ENCODE measurements at regions of chr7 and their contacts with region 1.

Region 1: DNA sequence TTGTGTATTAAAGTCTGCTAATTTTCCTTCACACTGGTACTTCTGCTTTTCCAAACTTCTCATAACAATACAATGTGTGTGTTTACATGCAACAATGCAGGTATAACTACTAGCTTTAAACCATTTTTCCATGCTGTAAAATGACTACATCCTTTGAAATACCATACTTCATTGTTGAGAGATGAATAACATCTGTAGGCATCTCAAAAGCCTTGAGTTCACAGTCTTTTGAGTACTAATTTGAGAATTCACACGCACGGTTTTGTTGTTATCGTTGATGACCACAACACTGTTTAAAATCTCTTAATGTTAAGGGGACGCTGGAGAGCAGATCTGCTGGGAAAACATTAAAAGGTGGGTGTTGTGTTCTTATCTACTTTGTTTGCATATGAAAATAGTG is 37.4 kb downstream of the SEMA3A start:
- DNase-seq: no peak
- H3K4me3 ChIP-seq: no peak overlapping the region
- H3K27ac ChIP-seq: peak overlapping the region; percentile 67
- H3K4me1 ChIP-seq: peaks cover 70% of the 10 kb centered on the region
- H3K27me3 ChIP-seq: no peaks in the 10 kb centered on the region
- CTCF ChIP-seq: no peak

Region 2: GRCh38 chr7:83588602-83589240 is 568.5 kb before region 1 on chr7:
- CTCF ChIA-PET with region 1: no interaction called
- POLR2A ChIA-PET with region 1: no interaction called
- intact Hi-C with region 1: no loop called
- DNase-seq: peak; percentile 61
- H3K4me3 ChIP-seq: no peak overlapping the region
- H3K27ac ChIP-seq: no peak overlapping the region
- H3K4me1 ChIP-seq: no peaks in the 10 kb centered on the region
- H3K27me3 ChIP-seq: peaks cover 8% of the 10 kb centered on the region
- CTCF ChIP-seq: no peak

Region 3: GRCh38 chr7:83970081-83970480 is 187.1 kb before region 1 on chr7:
- CTCF ChIA-PET with region 1: interaction called, 14 read pairs
- POLR2A ChIA-PET with region 1: no interaction called
- intact Hi-C with region 1: no loop called
- DNase-seq: peak; percentile 87
- H3K4me3 ChIP-seq: no peak overlapping the region
- H3K27ac ChIP-seq: no peak overlapping the region
- H3K4me1 ChIP-seq: peaks cover 29% of the 10 kb centered on the region
- H3K27me3 ChIP-seq: no peaks in the 10 kb centered on the region
- CTCF ChIP-seq: no peak

Measured in A673 (cell line).